OCI-LY7 (cell line): ENCODE measurements at regions of chr1 and their contacts with region 1.

Region 1: DNA sequence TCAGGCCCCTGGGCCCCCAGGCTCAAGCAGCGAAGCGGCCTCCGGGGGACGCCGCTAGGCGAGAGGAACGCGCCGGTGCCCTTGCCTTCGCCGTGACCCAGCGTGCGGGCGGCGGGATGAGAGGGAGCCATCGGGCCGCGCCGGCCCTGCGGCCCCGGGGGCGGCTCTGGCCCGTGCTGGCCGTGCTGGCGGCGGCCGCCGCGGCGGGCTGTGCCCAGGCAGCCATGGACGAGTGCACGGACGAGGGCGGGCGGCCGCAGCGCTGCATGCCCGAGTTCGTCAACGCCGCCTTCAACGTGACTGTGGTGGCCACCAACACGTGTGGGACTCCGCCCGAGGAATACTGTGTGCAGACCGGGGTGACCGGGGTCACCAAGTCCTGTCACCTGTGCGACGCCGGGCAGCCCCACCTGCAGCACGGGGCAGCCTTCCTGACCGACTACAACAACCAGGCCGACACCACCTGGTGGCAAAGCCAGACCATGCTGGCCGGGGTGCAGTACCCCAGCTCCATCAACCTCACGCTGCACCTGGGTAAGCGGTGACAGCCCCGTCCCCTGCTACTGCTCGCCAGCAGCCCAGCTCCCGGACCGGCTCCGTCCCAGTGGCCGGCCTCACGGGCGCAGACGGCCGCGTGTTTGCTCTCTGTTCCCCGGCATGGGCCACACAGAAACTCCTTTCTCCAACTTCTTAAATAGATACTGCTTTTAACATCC is 539 bp downstream of the LAMC1 start:
- DNase-seq: peak; percentile 87
- H3K4me3 ChIP-seq: peak overlapping the region; percentile 77
- H3K27ac ChIP-seq: peak overlapping the region; percentile 54
- H3K4me1 ChIP-seq: peaks cover 51% of the 10 kb centered on the region
- CTCF ChIP-seq: peak; percentile 71

Region 2: DNA sequence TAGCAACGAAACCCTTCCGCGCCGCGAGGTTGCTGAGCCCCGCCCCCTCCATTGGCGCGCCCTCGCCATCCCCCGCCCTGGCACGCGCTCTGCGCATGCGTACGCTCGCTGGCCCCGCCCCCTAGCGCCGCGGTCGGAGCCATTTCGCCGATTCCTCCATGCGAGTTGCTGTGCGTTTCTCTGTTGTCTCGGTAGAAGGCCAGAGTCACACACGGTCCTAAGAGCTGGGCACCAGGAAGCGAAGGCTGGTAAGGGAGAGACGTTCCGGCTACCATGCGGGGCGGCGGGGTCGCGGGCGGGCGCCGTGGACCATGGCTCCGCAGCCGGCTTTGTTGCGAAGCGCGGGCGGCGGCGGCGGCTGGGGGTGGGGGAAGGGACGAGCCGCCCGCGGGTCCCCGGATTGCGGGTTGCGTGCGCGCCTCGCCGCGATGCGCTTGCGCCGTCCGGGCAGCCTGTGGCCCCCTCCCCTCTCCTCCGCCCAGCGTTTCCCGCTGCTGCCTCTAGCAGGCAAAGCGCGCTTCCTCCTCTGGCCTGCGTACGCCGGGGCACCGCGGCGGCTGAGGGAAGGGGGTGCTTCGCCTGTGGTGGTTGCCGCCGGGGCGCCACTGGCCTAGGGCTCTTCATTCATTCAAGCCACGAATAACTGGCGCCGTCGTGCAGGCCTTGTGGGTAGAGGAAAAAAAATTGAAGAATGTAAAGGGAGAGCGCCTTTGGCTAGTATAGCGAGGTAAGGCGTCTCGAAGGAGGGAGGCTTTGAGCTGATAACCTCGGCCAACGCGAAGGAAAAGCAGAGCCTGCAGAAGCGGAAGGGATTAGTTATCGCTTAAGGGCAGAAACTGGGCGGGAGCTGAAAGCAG is 184.3 kb before region 1 on chr1 and contains the start of gene DHX9:
- CTCF ChIA-PET with region 1: no interaction called
- POLR2A ChIA-PET with region 1: no interaction called
- intact Hi-C with region 1: loop called (anchors 5 kb)
- DNase-seq: peak; percentile 95
- H3K4me3 ChIP-seq: peak within 1 kb of the TSS; percentile 98
- H3K27ac ChIP-seq: peak within 1 kb of the TSS; percentile 87
- H3K4me1 ChIP-seq: peaks cover 35% of the 10 kb centered on the region
- CTCF ChIP-seq: peak; percentile 55
- total RNA-seq, gene DHX9: 217 and 276 TPM in 2 replicates

Region 3: DNA sequence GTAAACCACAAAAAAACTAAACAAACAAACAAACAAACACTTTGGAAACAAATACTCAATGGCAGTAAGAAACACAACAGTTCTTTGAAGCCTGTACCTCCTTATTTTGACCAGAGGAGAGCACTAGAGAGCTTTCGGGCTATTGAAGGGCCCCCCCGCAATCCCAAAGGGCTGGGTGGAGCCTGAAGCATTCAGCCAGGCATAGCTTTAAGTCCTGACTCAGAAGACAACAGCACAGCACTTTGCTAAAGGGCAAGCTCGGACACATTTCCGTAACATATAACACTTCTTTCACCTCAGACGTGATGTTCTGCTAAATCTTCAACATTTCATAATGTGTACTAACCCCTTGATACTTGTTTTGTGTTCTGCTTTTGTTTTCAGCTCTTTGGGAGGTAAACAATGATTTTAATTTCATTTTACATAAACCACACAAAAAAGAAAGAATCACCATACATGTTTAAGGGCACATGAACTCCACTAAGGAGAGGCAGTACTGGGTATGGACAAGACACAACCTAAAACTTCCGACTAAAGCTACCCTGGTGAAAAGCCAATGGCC is 61.1 kb before region 1 on chr1:
- CTCF ChIA-PET with region 1: no interaction called
- POLR2A ChIA-PET with region 1: interaction called, 3 read pairs
- intact Hi-C with region 1: loop called (anchors 1 kb)
- DNase-seq: peak; percentile 81
- H3K4me3 ChIP-seq: no peak overlapping the region
- H3K27ac ChIP-seq: no peak overlapping the region
- H3K4me1 ChIP-seq: peaks cover 5% of the 10 kb centered on the region
- CTCF ChIP-seq: peak; percentile 99

Region 4: DNA sequence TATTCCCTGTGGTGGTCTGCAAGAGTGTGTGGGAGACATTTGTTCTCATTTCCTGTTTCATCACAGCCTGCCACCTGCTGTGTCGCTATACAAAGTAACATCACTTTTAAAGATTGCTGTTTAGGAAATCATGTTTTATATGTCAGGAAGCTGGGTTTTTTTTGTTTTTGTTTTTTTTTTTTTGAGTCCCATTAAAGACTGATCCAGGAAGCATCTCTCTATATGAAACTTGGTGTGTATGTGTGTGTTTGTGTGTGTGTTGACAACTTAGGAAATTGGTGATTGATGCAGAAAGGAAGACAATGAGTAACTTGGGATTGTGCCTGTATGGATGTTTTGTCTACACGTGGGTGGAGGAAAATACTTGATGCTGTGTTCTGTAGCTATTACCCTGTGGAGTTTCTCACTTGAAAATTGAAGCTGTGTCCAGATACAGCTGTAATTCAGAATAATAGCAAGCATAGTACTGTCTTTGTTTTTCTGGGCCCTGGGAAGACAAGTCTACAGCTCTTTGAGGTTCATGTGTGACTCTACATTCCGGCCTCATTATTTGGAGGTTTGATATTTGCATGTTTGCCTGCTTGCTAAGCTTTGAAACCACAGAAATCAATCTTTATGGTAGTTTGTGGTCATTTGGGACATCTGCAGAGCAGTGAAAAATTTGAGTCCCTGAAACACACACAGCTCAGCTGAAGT is 47.3 kb after region 1 on chr1:
- CTCF ChIA-PET with region 1: no interaction called
- POLR2A ChIA-PET with region 1: interaction called, 9 read pairs
- intact Hi-C with region 1: loop called (anchors 1 kb)
- DNase-seq: peak; percentile 75
- H3K4me3 ChIP-seq: peak overlapping the region; percentile 53
- H3K27ac ChIP-seq: peak overlapping the region; percentile 46
- H3K4me1 ChIP-seq: peaks cover 41% of the 10 kb centered on the region
- CTCF ChIP-seq: peak; percentile 38; the same call in 1 of the 2 replicates

Region 5: GRCh38 chr1:183635606-183636333 is 612.0 kb after region 1 on chr1 and contains the start of gene ARPC5:
- CTCF ChIA-PET with region 1: no interaction called
- POLR2A ChIA-PET with region 1: no interaction called
- intact Hi-C with region 1: loop called (anchors 10 kb)
- DNase-seq: peak; percentile 95
- H3K4me3 ChIP-seq: peak within 1 kb of the TSS; percentile 94
- H3K27ac ChIP-seq: peak within 1 kb of the TSS; percentile 75
- H3K4me1 ChIP-seq: peaks cover 32% of the 10 kb centered on the region
- CTCF ChIP-seq: no peak
- total RNA-seq, gene ARPC5: 116 and 148 TPM in 2 replicates